CD8-positive, alpha-beta memory T cell (primary cell): ENCODE measurements at regions of chr1 and their contacts with region 1.

Region 1: GRCh38 chr1:165697881-165698760 is at the start of gene ALDH9A1:
- DNase-seq: peak; percentile 82 to 88 (median 87)
- H3K4me3 ChIP-seq: peak within 1 kb of the TSS; percentile 78
- H3K4me3 Mint-ChIP-seq: peak within 1 kb of the TSS; percentile 92 to 100 (median 96)
- H3K27ac ChIP-seq: peak within 1 kb of the TSS; percentile 77
- H3K27ac Mint-ChIP-seq: peak within 1 kb of the TSS; percentile 83 to 100 (median 98)
- H3K4me1 ChIP-seq: peaks cover 23% of the 10 kb centered on the region
- H3K4me1 Mint-ChIP-seq: peaks cover 31 to 46% (median 37%) of the 10 kb centered on the region in 3 donors
- H3K27me3 ChIP-seq: no peaks in the 10 kb centered on the region
- H3K27me3 Mint-ChIP-seq: peaks cover 0 to 3% of the 10 kb centered on the region in 2 donors
- total RNA-seq, gene ALDH9A1: 42.9 to 44.4 TPM

Region 2: GRCh38 chr1:165630629-165631341 is 67.3 kb before region 1 on chr1 and contains the start of gene MGST3:
- CTCF ChIA-PET with region 1: interaction called, 4 read pairs
- POLR2A ChIA-PET with region 1: interaction called, 13 read pairs
- DNase-seq: peak; percentile 85 to 96 (median 91)
- H3K4me3 ChIP-seq: peak within 1 kb of the TSS; percentile 96
- H3K4me3 Mint-ChIP-seq: no peak within 1 kb of the TSS
- H3K27ac ChIP-seq: peak within 1 kb of the TSS; percentile 92
- H3K27ac Mint-ChIP-seq: peak within 1 kb of the TSS in 1 of 8 donors; percentile 82
- H3K4me1 ChIP-seq: peaks cover 13% of the 10 kb centered on the region
- H3K4me1 Mint-ChIP-seq: peaks cover 14 to 28% (median 18%) of the 10 kb centered on the region in 3 donors
- H3K27me3 ChIP-seq: no peaks in the 10 kb centered on the region
- H3K27me3 Mint-ChIP-seq: peaks cover 0 to 1% of the 10 kb centered on the region in 2 donors
- total RNA-seq, gene MGST3: 55.6 to 57.8 TPM

Region 3: DNA sequence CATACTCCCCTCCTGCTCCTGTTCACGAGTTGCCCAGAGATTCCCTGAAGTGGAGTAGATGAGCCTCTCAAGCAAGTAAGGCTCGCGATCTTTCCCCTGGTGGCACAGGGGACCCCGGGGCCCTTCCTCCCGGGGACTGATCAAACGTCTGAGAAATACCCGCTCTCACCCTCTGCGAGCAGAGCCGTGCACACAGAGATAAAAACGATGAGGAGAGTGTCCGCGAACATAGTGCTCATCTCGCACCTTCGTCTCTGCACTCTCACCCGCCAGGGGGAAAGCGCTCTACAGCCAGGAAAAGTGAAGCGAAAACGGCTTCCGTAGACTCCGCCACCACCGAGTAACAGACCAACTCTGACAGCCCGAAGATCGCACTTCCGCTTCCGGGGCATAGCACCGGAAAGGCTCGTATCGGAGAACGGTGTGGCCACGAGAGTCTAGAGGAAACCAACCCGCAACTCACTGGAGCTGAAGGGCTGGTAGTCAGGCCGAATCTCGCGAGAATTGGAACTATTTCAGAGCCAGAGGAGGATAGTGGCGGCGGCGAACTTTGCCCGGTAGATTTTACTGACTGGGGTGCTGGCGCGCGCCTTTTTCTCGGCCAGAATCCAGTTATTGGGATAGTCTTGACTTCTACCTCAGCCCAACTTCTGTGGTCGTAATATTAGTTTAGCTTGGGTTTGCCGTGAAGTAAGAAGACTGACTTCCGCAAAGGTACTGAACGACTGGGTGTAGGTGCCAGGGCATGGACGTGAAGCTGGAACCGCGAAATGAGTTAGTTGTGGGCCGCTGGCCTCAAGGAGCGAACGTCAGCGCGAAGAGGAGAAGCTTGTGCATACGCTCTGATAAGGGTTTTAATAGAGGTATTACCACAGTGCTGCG is 70.6 kb after region 1 on chr1 and contains the start of gene TMCO1:
- CTCF ChIA-PET with region 1: no interaction called
- POLR2A ChIA-PET with region 1: interaction called, 13 read pairs
- DNase-seq: peak; percentile 91 to 97 (median 93)
- H3K4me3 ChIP-seq: peak within 1 kb of the TSS; percentile 79
- H3K4me3 Mint-ChIP-seq: peak within 1 kb of the TSS; percentile 92 to 97 (median 95)
- H3K27ac ChIP-seq: peak within 1 kb of the TSS; percentile 81
- H3K27ac Mint-ChIP-seq: peak within 1 kb of the TSS; percentile 95 to 100 (median 98)
- H3K4me1 ChIP-seq: peaks cover 51% of the 10 kb centered on the region
- H3K4me1 Mint-ChIP-seq: peaks cover 55 to 76% (median 71%) of the 10 kb centered on the region in 3 donors
- H3K27me3 ChIP-seq: no peaks in the 10 kb centered on the region
- H3K27me3 Mint-ChIP-seq: peaks cover 0 to 2% of the 10 kb centered on the region in 2 donors
- total RNA-seq, gene TMCO1: 102 to 112 TPM